CD4-positive, alpha-beta T cell (primary cell): ENCODE measurements at regions of chr11 and their contacts with region 1.

Region 1: DNA sequence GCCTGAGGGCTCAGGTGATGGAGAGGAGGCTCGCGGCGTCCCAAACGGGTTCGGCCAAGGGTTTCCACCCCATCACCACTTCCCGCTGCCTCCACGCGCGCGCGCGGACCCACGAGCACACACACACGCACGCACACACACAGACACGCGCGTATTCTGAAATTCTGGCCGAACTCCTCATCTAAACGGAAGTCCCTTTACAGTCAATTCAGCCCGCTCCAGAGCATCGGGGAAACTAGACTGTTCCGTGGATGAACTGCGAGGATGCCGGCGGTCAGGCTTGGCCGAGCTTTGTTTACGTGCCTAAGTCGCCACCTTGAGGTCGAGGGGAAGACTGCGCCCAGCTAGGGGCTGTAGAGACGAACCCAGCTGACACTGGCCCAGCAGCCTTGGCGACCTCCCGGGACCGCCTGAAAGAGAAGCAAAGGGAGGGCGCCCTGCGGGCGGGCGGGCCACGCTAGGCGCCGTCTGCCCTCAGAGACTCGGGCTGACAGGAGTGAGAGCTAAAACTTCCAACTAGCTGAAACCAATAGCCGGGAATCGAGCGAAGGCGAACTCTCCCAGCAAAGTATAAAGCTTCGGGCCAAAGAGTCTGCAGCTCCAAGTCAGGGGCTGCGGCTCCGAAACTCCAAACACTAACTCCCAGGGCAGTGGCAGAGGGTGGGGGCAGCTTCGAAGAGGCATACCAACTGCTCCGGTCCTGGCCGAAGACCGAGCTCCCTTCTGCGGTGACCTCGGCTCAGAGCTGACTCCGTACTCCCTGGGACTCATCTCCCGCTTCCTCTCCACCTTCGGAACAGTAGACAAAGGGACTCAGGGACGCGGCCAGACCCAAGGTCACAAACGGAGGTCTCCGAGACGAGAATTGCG is 124.7 kb upstream of the C11orf58 start:
- DNase-seq: peak in 13 of 14 experiments; percentile 22 to 76 (median 39)
- ATAC-seq: peak; percentile 79
- H3K4me3 ChIP-seq: peak overlapping the region; percentile 42
- H3K4me3 Mint-ChIP-seq: peak overlapping the region; percentile 79
- H3K27ac ChIP-seq: no peak overlapping the region
- H3K27ac Mint-ChIP-seq: no peak overlapping the region
- H3K4me1 ChIP-seq: peaks cover 22% of the 10 kb centered on the region
- H3K4me1 Mint-ChIP-seq: peaks cover 34% of the 10 kb centered on the region
- H3K27me3 ChIP-seq: peaks cover 59 to 85% of the 10 kb centered on the region in 2 experiments
- H3K27me3 Mint-ChIP-seq: peaks cover 67% of the 10 kb centered on the region
- CTCF ChIP-seq: peak; percentile 64

Region 2: DNA sequence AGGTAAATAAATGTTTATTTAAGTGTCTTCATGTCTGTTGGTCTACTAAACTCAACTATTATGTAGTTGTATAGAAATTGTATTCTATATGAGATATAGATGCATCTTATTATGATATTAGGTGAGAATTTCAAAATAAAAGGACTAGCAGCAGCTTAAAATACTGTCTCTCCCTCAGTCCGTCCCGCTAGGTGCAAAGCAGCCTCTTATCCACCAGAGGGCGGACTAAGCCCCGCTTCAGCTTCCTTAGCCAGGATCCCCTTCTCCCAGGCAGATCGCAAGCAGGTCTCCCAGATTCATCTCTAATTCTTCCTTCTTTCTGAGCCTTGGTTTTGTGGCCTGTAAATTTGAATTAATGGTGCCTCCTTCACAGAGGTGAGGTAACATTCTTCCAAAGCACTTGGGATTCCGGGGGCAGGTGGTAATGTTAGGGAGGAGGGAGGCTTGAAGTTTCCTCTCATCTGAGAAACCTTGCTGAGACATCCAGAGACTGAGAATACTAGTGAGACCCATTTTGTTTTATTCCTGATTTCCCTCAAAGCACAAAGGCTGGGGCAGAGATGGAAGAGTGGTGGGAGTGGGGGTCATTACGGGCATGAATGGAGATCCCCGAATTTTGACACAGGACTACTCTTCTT is 1512.6 kb before region 1 on chr11:
- CTCF ChIA-PET with region 1: no interaction called
- POLR2A ChIA-PET with region 1: no interaction called
- intact Hi-C with region 1: loop called in 1 of 2 experiments (anchors 10 kb)
- DNase-seq: peak; percentile 6 to 61 (median 26)
- ATAC-seq: peak; percentile 49
- H3K4me3 ChIP-seq: no peak overlapping the region
- H3K4me3 Mint-ChIP-seq: no peak overlapping the region
- H3K27ac ChIP-seq: no peak overlapping the region
- H3K27ac Mint-ChIP-seq: no peak overlapping the region
- H3K4me1 ChIP-seq: no peaks in the 10 kb centered on the region
- H3K4me1 Mint-ChIP-seq: no peaks in the 10 kb centered on the region
- H3K27me3 ChIP-seq: peaks cover 4 to 13% of the 10 kb centered on the region in 2 experiments
- H3K27me3 Mint-ChIP-seq: peaks cover 49% of the 10 kb centered on the region
- CTCF ChIP-seq: peak; percentile 75

Region 3: GRCh38 chr11:15650105-15650938 is 963.4 kb before region 1 on chr11:
- CTCF ChIA-PET with region 1: no interaction called
- POLR2A ChIA-PET with region 1: no interaction called
- intact Hi-C with region 1: loop called (anchors 5 to 10 kb)
- DNase-seq: peak; percentile 24 to 77 (median 55)
- ATAC-seq: peak; percentile 88
- H3K4me3 ChIP-seq: peak overlapping the region; percentile 26
- H3K4me3 Mint-ChIP-seq: no peak overlapping the region
- H3K27ac ChIP-seq: no peak overlapping the region
- H3K27ac Mint-ChIP-seq: no peak overlapping the region
- H3K4me1 ChIP-seq: peaks cover 12% of the 10 kb centered on the region
- H3K4me1 Mint-ChIP-seq: peaks cover 6% of the 10 kb centered on the region
- H3K27me3 ChIP-seq: peaks cover 0 to 11% of the 10 kb centered on the region in 2 experiments
- H3K27me3 Mint-ChIP-seq: peaks cover 50% of the 10 kb centered on the region
- CTCF ChIP-seq: peak; percentile 62

Region 4: DNA sequence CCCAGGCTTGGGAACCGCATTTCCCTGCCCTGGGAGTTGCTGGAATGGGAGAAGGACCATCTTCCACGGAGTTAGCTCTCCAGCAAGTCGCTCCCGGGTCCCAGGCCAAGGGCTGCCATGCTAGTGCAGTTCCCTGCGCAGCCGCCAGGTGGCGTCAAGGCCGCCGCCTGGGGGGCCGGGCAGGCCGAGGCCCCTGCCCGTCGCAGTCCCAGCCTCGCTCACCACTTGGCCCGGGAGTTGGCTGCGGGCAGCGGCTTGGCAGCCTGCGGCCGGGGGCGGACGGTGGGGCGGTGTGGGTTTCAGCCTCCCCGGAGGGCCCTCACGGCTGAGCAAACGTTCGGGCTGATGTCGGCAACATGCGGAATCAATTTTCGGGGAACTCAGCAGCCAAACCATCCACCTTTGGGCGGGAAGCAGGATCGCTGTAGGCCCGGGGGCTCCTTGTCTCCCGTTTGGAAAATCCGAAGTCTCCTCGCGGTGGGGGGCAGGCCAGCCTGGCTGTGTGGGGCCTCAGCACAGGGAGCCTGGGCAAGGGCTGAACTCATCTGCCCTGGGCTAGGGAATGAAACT is 672.5 kb before region 1 on chr11:
- CTCF ChIA-PET with region 1: no interaction called
- POLR2A ChIA-PET with region 1: no interaction called
- intact Hi-C with region 1: loop called in 1 of 2 experiments (anchors 10 kb)
- DNase-seq: peak in 2 of 14 experiments; percentile 6 to 16
- ATAC-seq: no peak
- H3K4me3 ChIP-seq: no peak overlapping the region
- H3K4me3 Mint-ChIP-seq: no peak overlapping the region
- H3K27ac ChIP-seq: no peak overlapping the region
- H3K27ac Mint-ChIP-seq: no peak overlapping the region
- H3K4me1 ChIP-seq: no peaks in the 10 kb centered on the region
- H3K4me1 Mint-ChIP-seq: no peaks in the 10 kb centered on the region
- H3K27me3 ChIP-seq: peaks cover 0 to 2% of the 10 kb centered on the region in 2 experiments
- H3K27me3 Mint-ChIP-seq: no peaks in the 10 kb centered on the region
- CTCF ChIP-seq: peak; percentile 36

Region 5: GRCh38 chr11:16136792-16137390 is 476.9 kb before region 1 on chr11:
- CTCF ChIA-PET with region 1: no interaction called
- POLR2A ChIA-PET with region 1: no interaction called
- intact Hi-C with region 1: no loop called
- DNase-seq: no peak
- ATAC-seq: no peak
- H3K4me3 ChIP-seq: no peak overlapping the region
- H3K4me3 Mint-ChIP-seq: no peak overlapping the region
- H3K27ac ChIP-seq: no peak overlapping the region
- H3K27ac Mint-ChIP-seq: no peak overlapping the region
- H3K4me1 ChIP-seq: no peaks in the 10 kb centered on the region
- H3K4me1 Mint-ChIP-seq: no peaks in the 10 kb centered on the region
- H3K27me3 ChIP-seq: no peaks in the 10 kb centered on the region
- H3K27me3 Mint-ChIP-seq: no peaks in the 10 kb centered on the region
- CTCF ChIP-seq: no peak